ENCODE measurements at regions of chr9 and their contacts with region 1.

Region 1: DNA sequence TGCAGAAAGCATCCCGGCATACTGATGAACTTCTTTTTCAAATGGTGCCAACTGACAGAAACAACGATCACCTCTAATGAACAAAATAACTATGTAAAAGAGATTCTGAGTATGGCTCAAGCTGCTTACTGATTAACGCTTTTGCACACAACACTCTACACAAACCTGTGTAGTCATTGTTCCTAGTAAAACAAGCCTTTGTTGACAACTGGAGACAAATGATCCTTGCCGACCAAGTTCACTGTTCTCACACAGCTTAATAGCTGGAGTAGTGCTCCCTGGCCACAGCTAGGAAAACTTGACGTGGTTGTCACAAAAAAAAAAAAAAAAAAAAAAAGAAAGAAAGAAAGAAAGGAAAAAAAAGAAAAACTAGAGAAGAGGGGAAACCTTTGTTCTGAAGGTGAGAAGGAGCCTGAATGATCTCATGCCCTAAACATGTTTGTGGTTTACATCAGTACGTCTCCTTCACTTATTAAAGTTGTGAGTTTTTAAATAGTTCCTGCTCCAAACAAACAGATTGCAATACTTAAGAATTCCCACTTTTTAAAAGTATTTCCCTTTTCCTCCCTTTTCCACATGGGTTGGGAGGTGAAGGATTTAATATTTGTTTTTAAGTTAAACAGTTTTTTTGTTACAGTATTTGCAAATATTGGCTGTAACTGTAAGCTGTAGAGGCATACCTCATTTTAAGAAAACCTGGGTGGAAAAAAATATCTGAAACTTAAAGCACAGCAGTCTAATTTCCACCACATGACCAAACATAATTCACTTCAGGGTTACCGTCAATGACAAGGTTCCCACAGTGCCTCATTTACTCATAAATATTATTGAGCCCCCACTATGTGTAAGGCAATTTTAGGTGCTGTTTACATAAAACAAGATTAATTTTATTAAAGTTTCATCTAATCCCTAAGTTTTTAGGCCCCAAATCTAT is 63.7 kb downstream of the GLIS3 start:
- DNase-seq: peak in 1 of 2 experiments; percentile 68
- H3K4me3 ChIP-seq: peak overlapping the region; percentile 35; the same call in 1 of the 2 replicates
- H3K27ac ChIP-seq: peak overlapping the region; percentile 92
- H3K4me1 ChIP-seq: peaks cover 16% of the 10 kb centered on the region
- H3K27me3 ChIP-seq: no peaks in the 10 kb centered on the region
- CTCF ChIP-seq: no peak

Region 2: DNA sequence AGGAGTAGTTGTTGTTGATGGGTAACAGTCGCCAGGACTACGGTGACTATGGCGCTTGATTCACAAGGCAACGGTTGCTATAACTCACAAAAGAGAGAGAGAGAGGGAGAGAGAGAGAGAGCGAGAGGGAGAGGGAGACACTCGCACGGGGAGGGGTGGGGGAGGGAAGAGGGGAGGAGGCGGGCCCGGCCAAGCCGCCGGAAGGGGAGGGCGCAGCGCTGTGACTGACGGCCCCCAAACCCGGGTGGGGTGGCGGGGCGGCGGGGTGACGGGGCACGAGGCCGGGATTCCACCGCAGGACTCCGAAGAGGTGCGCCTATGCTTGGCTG is 710.3 kb before region 1 on chr9 and contains the start of gene RFX3:
- CTCF ChIA-PET with region 1: interaction called, 4 read pairs
- POLR2A ChIA-PET with region 1: no interaction called
- intact Hi-C with region 1: loop called (anchors 5 kb)
- DNase-seq: peak; percentile 70 to 83
- H3K4me3 ChIP-seq: peak within 1 kb of the TSS; percentile 87
- H3K27ac ChIP-seq: peak within 1 kb of the TSS; percentile 100
- H3K4me1 ChIP-seq: peaks cover 16% of the 10 kb centered on the region
- H3K27me3 ChIP-seq: no peaks in the 10 kb centered on the region
- CTCF ChIP-seq: no peak
- total RNA-seq, gene RFX3: 4.6 and 8.4 TPM in 2 replicates

Region 3: DNA sequence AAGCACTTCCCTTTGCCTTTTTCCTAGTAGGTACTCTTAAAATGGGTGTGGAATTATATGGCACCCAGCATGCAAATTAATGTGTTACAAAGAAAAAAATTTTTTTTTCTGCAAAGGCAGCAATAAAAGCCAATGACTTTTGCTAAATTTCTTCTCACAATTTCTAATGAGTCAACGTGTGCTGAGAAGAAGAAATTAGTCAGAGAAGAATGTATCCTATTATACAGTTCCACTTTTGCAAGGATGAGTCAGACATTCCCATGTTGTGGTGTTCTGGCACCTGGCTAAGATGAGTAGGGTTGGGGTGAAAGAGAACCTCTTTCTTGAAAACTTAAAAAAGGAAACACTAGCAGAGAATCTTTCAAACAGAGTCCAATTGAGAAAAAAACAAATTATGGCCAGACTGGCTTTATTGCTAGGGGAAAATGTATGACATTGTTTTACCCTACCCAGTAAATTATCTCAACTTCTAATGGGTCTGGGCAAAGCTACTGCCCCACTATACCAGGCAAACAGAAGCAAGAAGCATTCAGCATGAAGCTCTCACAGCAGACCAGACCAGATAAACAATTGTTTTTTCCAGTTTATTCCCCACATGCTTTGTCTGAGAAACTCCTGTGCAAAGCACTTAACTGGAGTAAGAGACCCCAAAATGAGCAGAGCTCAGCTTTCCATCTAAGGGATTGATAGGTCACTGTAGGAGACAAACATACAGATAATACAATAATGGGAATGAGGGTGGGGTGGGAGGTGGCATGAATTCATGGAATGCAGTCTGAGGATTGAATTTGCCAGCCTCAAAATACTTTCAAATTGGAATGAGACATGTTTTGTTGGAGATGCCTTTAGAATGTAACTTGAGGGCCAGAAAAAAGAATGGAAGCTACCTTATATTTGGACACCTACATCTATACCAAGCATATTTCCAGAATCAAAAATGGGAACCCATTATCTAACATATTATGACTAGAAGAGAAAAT is 489.6 kb before region 1 on chr9:
- CTCF ChIA-PET with region 1: no interaction called
- POLR2A ChIA-PET with region 1: no interaction called
- intact Hi-C with region 1: loop called (anchors 5 kb)
- DNase-seq: peak in 1 of 2 experiments; percentile 88
- H3K4me3 ChIP-seq: no peak overlapping the region
- H3K27ac ChIP-seq: peak overlapping the region; percentile 81
- H3K4me1 ChIP-seq: peaks cover 36% of the 10 kb centered on the region
- H3K27me3 ChIP-seq: no peaks in the 10 kb centered on the region
- CTCF ChIP-seq: no peak

Region 4: GRCh38 chr9:4027606-4028005 is 208.5 kb before region 1 on chr9:
- CTCF ChIA-PET with region 1: no interaction called
- POLR2A ChIA-PET with region 1: no interaction called
- intact Hi-C with region 1: no loop called
- DNase-seq: no peak
- H3K4me3 ChIP-seq: no peak overlapping the region
- H3K27ac ChIP-seq: no peak overlapping the region
- H3K4me1 ChIP-seq: peaks cover 3% of the 10 kb centered on the region; the same call in 1 of the 2 replicates
- H3K27me3 ChIP-seq: no peaks in the 10 kb centered on the region
- CTCF ChIP-seq: no peak